ENCODE measurements at regions of chr1 and their contacts with region 1.

Region 1: DNA sequence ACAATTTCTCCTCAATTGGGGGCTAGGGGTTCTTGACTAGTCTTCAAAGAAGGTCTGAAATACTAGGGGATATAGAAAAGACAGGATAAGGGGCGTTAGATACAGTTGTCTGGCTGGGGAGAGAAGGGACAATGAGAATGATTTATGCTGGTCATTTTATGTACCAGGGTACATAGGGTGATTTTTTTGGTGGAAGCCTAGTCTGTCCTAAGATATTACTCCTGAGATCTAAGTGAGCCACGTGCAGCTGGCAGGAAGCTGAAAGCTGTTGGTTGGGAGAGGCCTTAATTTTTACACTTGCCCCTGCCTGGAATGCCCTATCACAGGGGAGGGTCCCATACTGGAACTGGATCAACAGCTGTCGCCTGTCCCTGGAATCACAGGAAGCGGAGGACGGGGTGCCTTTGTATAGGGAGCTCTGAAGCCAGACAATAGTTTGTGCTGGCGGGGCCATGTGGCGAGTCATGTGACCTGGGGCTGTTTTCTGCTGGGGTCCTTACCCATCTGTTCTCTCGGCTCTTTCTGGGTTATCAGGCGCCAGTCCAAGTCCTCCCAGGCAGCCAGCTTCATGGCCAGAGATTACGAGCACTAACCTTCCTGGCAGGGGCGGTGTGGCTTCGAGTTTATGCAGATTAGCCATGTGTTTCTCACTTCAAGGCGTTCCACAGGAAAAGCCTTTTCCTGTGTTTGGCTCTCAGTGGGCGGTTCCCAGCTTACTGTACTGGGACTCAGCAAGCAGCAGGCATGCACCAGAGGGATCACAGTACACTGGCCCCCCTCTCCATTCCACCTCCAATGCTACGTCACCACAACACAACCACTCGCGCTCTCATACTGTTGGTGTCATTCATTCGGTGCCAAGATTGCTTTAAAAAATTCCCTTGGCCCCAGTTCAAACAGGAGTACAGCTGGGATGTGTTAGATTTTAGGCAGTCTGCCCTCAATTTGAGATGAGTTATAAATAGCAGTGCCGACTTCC is 27.5 kb downstream of the ARID1A start:
- DNase-seq: peak; percentile 93

Region 2: DNA sequence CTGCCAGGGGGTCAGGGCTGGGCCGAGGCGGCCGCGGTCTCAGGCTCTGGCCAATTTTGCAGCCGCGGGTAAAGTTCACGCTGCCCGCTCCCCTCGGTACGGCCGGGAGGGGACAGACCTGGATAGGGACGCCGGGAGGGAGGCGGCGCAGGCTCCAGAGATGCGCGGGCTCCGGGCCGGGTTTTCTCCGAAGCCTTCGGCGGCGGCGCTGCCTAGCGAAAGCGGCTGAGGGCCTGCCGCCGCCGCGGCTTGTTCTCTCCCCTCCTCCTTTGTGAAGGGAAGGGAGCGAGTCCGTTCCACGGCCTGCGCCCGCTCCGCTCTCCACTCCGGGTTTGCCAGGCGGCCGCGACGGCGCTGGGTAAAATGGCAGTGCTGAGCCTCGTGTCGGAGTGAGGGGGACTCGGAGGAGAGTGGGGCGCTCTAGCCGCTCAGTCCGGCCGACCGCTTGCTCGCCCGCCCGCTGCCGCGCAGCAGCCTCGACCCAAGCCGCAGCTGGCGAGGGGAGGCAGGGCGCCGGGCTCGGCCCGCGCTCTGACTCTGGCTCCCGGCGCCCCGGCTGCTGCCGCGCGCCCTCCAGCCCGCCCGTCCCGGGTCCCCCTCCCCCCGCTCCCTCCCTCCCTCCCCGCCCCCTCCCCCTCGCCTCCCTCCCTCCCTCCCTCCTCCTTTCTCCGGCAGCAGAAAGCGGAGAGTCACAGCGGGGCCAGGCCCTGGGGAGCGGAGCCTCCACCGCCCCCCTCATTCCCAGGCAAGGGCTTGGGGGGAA is 27.8 kb before region 1 on chr1 and contains the start of gene ARID1A:
- intact Hi-C with region 1: loop called (anchors 2 kb)
- DNase-seq: peak; percentile 97
- total RNA-seq, gene ARID1A: 52.1 TPM

Region 3: GRCh38 chr1:26744075-26744959 is 21.0 kb after region 1 on chr1:
- intact Hi-C with region 1: loop called (anchors 2 kb)
- DNase-seq: peak; percentile 91

Region 4: DNA sequence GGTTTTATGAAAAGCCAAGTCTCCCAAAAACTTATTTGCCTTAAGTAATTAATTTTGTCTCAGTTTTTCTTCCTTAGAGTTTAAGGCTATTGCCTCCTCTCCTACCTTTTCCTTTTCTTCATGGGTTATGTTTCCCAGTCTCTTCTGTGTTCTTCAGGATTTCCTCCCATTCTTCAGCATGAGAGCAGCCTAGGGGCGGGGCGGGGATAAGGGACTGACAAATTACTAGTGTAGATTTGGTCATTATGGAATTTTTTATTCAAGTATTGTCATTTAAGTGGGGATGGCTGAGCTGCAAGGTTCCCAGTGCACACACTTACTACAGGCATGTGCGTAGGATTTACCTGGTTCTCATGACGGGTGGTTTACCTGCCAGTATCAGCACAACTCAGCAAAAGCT is 29.2 kb after region 1 on chr1:
- intact Hi-C with region 1: loop called (anchors 2 kb)
- DNase-seq: no peak

Region 5: DNA sequence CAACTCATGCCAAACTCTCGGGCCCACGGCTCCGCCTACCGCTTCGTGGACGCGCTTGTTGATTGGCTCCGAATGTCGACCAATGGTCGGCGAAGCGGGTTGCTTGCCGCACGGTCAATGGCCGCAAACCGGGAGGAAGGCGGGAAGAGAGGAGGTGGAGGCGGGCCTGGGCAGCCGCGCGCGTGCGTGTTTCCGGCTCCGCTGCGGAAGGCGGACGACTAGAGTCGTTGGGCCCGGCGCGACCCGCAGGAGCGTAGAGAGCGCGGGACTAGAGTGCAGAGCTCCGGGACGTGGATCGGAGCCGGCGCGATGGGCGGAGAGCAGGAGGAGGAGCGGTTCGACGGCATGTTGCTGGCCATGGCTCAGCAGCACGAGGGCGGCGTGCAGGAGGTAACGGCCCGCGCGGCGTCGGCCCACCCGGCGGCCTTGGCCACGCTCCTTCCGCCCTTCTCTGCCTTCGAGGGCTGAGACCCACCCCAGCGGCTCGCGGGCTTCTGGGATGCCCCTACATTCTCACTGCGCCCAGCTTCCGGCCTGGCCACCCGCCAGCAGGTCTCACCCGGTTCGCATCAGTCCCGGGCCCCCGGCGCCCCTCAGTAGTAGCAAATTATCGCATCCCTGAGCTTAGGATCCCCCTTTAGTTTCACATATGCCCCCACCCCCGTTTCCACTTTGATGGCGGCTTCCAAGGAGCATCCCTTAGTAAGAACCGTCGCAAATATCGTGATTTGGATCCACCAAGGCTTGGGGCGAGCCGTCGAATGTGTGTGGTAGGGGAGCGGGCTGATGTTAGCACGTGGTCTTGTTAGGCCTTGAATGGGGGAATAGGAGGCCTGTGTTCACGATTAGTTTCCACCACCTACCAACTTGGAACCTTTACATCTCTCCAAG is 198.5 kb after region 1 on chr1 and contains the start of gene NUDC:
- intact Hi-C with region 1: no loop called
- DNase-seq: peak; percentile 100
- total RNA-seq, gene NUDC: 55.5 TPM

Region 6: DNA sequence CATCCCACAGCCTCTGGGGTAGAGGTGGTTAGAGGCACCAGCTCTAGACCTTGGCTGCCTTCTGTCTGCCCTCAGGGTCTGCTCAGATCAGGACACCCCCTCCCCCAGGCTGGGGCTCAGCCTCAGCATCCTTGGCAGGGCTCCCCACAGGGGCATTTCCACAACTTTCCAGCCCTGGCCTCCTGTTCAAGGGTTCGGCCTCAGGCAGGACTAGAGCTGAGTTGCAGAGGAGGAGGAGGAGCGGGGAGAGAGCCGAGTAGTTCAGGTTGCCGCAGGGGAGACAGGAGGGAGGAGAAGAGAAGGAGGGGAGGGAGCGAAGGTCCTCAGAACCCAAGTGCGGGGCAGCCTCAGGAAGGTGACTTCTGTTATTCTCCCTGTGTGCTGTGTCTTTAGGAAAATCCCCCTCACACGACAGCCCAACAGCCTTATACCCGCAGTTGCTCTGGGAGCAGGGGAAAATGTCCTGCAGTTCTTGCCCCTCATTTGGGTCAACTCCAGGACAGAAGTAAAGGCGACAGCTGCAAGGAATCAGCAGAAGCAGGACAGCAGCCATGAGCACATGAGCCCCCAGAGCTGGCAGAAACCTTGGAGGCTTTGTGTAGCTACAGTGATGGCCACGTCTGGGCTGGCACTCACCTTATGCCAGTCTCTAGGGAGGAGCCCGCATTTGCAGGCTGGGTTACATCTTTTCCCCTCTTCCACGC is 335.8 kb after region 1 on chr1:
- intact Hi-C with region 1: no loop called
- DNase-seq: no peak